Naive thymus-derived CD4-positive, alpha-beta T cell (primary cell): ENCODE measurements at regions of chr4 and their contacts with region 1.

Region 1: DNA sequence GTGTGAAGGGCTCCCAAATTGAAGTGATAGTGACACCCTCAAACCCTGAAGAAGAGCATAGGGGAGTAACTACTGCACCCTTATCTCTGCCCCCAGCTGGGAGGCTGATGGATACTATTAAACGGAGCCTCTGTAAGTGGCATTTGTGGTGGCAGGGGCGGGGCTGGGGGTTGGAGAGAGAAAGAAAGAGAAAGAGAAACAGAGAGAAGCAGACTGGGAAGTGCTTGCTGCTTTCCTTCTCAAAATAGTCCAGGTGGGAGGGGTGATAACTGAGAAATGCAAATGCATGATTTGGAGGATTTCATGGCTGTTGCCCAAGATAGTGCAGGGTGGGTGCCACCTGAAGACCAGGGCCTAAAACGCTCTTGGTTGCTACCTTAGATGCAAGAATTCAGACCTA is 253.5 kb upstream of the GATB start:
- DNase-seq: peak in 4 of 9 donors; percentile 18 to 45 (median 29)
- ATAC-seq: peak; percentile 33
- H3K4me3 ChIP-seq: no peak overlapping the region
- H3K4me3 Mint-ChIP-seq: peak overlapping the region; percentile 14 to 73 (median 59)
- H3K27ac ChIP-seq: no peak overlapping the region
- H3K27ac Mint-ChIP-seq: peak overlapping the region; percentile 50 to 88 (median 80)
- H3K4me1 ChIP-seq: peaks cover 36 to 40% of the 10 kb centered on the region in 2 donors
- H3K4me1 Mint-ChIP-seq: peaks cover 41 to 67% (median 52%) of the 10 kb centered on the region in 7 donors
- H3K27me3 ChIP-seq: no peaks in the 10 kb centered on the region
- H3K27me3 Mint-ChIP-seq: peaks cover 0 to 4% (median 0%) of the 10 kb centered on the region in 5 donors

Region 2: DNA sequence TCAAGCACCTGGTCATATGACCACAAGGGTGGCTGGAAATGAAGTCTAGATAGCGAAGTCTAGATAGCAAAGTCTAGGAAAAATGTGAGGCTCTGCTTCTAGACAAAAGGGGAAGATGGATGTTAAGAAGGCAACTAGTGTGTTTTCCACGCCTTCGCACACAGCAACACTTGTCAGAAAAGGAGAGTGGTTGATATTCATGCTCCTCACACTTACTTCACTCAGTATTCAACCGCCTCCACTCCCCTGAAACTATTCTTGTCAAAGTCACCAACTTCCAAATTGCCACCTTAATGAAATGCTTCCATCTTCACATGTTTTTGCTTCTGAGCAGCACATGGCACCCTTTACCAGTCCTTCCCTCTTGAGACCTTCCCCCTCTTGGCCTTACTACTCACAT is 1963.7 kb before region 1 on chr4:
- CTCF ChIA-PET with region 1: no interaction called
- POLR2A ChIA-PET with region 1: no interaction called
- intact Hi-C with region 1: no loop called
- DNase-seq: no peak
- ATAC-seq: no peak
- H3K4me3 ChIP-seq: no peak overlapping the region
- H3K4me3 Mint-ChIP-seq: no peak overlapping the region
- H3K27ac ChIP-seq: no peak overlapping the region
- H3K27ac Mint-ChIP-seq: no peak overlapping the region
- H3K4me1 ChIP-seq: no peaks in the 10 kb centered on the region
- H3K4me1 Mint-ChIP-seq: no peaks in the 10 kb centered on the region
- H3K27me3 ChIP-seq: peaks cover 0 to 3% of the 10 kb centered on the region in 2 donors
- H3K27me3 Mint-ChIP-seq: peaks cover 0 to 9% (median 0%) of the 10 kb centered on the region in 5 donors

Region 3: GRCh38 chr4:150943818-150944217 is 1070.5 kb before region 1 on chr4:
- CTCF ChIA-PET with region 1: no interaction called
- POLR2A ChIA-PET with region 1: no interaction called
- intact Hi-C with region 1: no loop called
- DNase-seq: no peak
- ATAC-seq: no peak
- H3K4me3 ChIP-seq: no peak overlapping the region
- H3K4me3 Mint-ChIP-seq: no peak overlapping the region
- H3K27ac ChIP-seq: no peak overlapping the region
- H3K27ac Mint-ChIP-seq: peak overlapping the region in 4 of 9 donors; percentile 1 to 42 (median 21)
- H3K4me1 ChIP-seq: peaks cover 0 to 7% of the 10 kb centered on the region in 2 donors
- H3K4me1 Mint-ChIP-seq: peaks cover 25 to 76% (median 65%) of the 10 kb centered on the region in 7 donors
- H3K27me3 ChIP-seq: no peaks in the 10 kb centered on the region
- H3K27me3 Mint-ChIP-seq: no peaks in the 10 kb centered on the region

Region 4: DNA sequence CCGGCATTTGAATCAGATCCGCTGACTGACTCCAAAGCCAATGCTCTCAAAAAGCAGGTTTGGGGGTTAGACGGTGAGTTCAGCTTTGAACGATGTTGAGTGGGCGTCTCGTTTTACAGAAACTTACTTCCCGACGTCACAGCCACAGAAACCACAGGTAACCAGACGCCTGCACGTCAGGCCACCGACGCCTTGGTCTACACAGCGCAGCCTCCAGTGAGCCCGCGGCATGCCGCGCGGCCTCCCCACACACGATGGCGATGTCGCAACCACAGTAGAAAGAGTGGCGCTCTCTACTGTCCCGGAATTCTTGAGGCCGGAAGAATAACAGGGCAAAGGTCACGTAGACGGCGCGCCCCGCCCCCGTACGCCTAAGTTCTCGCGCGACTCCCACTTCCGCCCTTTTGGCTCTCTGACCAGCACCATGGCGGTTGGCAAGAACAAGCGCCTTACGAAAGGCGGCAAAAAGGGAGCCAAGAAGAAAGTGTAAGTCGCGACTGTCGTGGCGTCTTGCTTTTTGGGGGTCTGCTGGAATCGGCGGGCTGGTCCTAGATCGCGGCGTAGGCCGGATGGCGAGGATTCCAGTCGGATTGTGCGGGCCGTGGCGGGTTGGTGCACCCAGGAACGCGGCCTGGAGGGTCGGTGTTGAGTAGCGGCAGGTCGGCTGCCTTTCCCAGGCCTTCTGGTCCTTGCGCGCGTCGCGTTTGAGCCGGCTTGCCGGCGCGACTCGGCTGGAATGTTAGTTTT is 914.9 kb before region 1 on chr4 and contains the start of gene RPS3A:
- CTCF ChIA-PET with region 1: no interaction called
- POLR2A ChIA-PET with region 1: no interaction called
- intact Hi-C with region 1: loop called in 1 of 2 experiments (anchors 10 kb)
- DNase-seq: peak; percentile 95 to 100 (median 99)
- ATAC-seq: peak; percentile 97
- H3K4me3 ChIP-seq: peak within 1 kb of the TSS; percentile 96
- H3K4me3 Mint-ChIP-seq: peak within 1 kb of the TSS; percentile 89 to 99 (median 96)
- H3K27ac ChIP-seq: peak within 1 kb of the TSS; percentile 89
- H3K27ac Mint-ChIP-seq: peak within 1 kb of the TSS; percentile 97 to 99 (median 98)
- H3K4me1 ChIP-seq: peaks cover 14 to 18% of the 10 kb centered on the region in 2 donors
- H3K4me1 Mint-ChIP-seq: peaks cover 24 to 43% (median 28%) of the 10 kb centered on the region in 7 donors
- H3K27me3 ChIP-seq: no peaks in the 10 kb centered on the region
- H3K27me3 Mint-ChIP-seq: peaks cover 0 to 4% (median 0%) of the 10 kb centered on the region in 5 donors
- total RNA-seq, gene RPS3A: 1,723 to 5,358 (median 3,483) TPM

Region 5: GRCh38 chr4:151882072-151882803 is 132.0 kb before region 1 on chr4:
- CTCF ChIA-PET with region 1: no interaction called
- POLR2A ChIA-PET with region 1: no interaction called
- intact Hi-C with region 1: loop called in 1 of 2 experiments (anchors 5 kb)
- DNase-seq: no peak
- ATAC-seq: peak; percentile 42
- H3K4me3 ChIP-seq: no peak overlapping the region
- H3K4me3 Mint-ChIP-seq: peak overlapping the region in 6 of 10 donors; percentile 4 to 56 (median 30)
- H3K27ac ChIP-seq: no peak overlapping the region
- H3K27ac Mint-ChIP-seq: peak overlapping the region; percentile 1 to 72 (median 39)
- H3K4me1 ChIP-seq: peaks cover 0 to 3% of the 10 kb centered on the region in 2 donors
- H3K4me1 Mint-ChIP-seq: peaks cover 6 to 30% (median 29%) of the 10 kb centered on the region in 7 donors
- H3K27me3 ChIP-seq: no peaks in the 10 kb centered on the region
- H3K27me3 Mint-ChIP-seq: no peaks in the 10 kb centered on the region

Region 6: DNA sequence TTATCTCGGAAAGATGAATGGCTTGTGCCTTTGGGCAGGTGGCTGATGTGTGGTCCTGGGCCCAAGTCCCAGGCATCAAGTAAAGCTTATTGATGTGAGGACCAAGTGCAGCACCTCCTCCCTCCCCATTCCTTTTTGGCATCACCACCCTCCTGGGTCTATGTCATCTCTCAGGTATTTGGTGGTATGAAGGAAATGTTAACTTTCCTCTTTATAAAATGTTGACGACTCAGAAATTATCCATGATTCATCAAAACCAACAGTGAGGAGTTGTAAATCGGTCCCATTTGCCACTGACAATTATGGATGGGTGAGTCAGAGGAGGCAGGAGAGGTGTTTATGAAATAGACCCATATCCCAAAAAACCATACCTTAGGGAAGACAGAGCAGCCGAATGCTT is 24.1 kb before region 1 on chr4:
- CTCF ChIA-PET with region 1: no interaction called
- POLR2A ChIA-PET with region 1: interaction called, 4 read pairs
- intact Hi-C with region 1: loop called in 1 of 2 experiments (anchors 2 kb)
- DNase-seq: no peak
- ATAC-seq: no peak
- H3K4me3 ChIP-seq: no peak overlapping the region
- H3K4me3 Mint-ChIP-seq: peak overlapping the region in 4 of 10 donors; percentile 18 to 84 (median 76)
- H3K27ac ChIP-seq: no peak overlapping the region
- H3K27ac Mint-ChIP-seq: peak overlapping the region; percentile 77 to 92 (median 90)
- H3K4me1 ChIP-seq: peaks cover 48 to 51% of the 10 kb centered on the region in 2 donors
- H3K4me1 Mint-ChIP-seq: peaks cover 38 to 64% (median 56%) of the 10 kb centered on the region in 7 donors
- H3K27me3 ChIP-seq: no peaks in the 10 kb centered on the region
- H3K27me3 Mint-ChIP-seq: peaks cover 0 to 2% (median 0%) of the 10 kb centered on the region in 5 donors

Region 7: DNA sequence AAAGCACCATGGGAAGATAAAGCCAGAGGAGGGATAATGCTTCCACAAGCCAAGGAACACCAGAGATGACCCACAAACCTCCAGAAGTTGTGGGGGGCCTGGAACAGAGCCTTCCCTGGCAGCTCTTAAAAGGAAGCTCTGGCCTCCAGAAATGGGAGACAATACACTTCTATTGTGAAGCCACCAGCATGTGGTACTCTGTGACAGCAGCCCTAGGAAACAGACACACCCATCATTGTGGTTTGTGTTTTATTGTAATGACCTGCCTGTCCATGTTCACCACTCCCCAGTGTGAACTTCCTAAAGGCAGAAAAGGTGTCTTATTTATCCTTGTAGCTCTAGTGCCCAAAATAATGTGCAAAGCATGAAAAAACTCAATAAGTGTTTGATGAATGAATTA is 10.6 kb after region 1 on chr4:
- CTCF ChIA-PET with region 1: interaction called, 6 read pairs
- POLR2A ChIA-PET with region 1: interaction called, 5 read pairs
- intact Hi-C with region 1: loop called in 1 of 2 experiments (anchors 2 kb)
- DNase-seq: no peak
- ATAC-seq: no peak
- H3K4me3 ChIP-seq: no peak overlapping the region
- H3K4me3 Mint-ChIP-seq: no peak overlapping the region
- H3K27ac ChIP-seq: no peak overlapping the region
- H3K27ac Mint-ChIP-seq: peak overlapping the region in 1 of 9 donors; percentile 31
- H3K4me1 ChIP-seq: peaks cover 12 to 15% of the 10 kb centered on the region in 2 donors
- H3K4me1 Mint-ChIP-seq: peaks cover 0 to 11% (median 0%) of the 10 kb centered on the region in 7 donors
- H3K27me3 ChIP-seq: no peaks in the 10 kb centered on the region
- H3K27me3 Mint-ChIP-seq: peaks cover 0 to 8% (median 0%) of the 10 kb centered on the region in 5 donors

Region 8: DNA sequence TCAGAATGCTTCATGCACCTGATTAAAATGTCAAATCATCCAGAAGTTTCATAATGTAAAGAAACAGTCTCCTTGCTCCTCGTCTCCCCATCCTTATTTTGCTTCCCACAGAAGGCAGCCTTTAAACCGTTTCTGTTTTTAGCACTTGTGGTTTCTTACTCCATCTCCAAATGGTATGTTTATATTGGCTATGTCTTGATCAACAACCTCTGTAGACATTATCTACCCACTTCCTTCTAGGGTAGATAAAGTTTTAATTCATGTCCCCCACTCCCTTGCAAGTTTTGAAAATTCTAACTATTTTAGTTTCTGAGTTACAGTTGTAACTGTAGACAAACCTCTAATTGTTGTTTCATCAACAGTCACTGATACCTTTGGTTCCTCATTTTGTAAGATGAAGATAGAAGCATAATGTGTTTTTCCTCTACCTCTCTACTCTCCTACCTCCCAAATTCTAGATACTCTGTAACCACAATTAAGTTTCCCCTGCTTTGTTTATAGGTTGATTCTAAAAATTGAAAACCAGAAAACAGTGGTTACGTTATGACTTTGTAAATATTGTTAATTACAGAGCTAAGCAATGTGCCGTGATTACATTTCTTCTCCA is 38.3 kb after region 1 on chr4:
- CTCF ChIA-PET with region 1: no interaction called
- POLR2A ChIA-PET with region 1: interaction called, 4 read pairs
- intact Hi-C with region 1: loop called (anchors 5 kb)
- DNase-seq: no peak
- ATAC-seq: no peak
- H3K4me3 ChIP-seq: no peak overlapping the region
- H3K4me3 Mint-ChIP-seq: peak overlapping the region in 6 of 10 donors; percentile 2 to 35 (median 14)
- H3K27ac ChIP-seq: no peak overlapping the region
- H3K27ac Mint-ChIP-seq: peak overlapping the region in 7 of 9 donors; percentile 12 to 69 (median 55)
- H3K4me1 ChIP-seq: peaks cover 11 to 12% of the 10 kb centered on the region in 2 donors
- H3K4me1 Mint-ChIP-seq: peaks cover 15 to 32% (median 21%) of the 10 kb centered on the region in 7 donors
- H3K27me3 ChIP-seq: no peaks in the 10 kb centered on the region
- H3K27me3 Mint-ChIP-seq: peaks cover 0 to 10% (median 0%) of the 10 kb centered on the region in 5 donors

Region 9: DNA sequence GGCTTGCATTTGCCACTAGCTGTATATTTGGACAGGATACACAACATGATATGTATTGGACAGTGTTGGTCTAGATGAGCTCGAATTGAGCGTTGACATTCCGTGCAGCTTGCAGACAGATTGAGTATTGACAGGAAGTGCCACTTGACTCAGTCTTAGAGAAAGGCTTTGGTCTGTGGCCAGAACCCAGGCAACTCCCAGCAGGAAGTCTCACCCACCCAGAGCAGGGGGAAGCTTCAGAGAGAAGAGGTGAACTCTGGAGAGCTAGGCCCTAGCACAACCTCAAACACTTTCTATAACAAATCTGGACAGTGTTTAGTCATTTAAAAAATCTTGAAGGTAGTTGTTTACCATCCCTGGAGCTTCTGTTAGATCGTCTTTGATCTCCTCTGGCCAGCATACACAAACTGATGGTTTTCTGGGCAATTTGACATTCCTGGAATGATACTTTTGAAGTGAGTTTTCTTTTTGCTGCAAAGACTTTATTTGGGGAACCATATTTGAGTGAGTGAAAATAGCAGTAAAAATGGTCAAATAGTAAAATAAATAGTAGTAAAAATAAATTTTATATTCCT is 241.2 kb after region 1 on chr4:
- CTCF ChIA-PET with region 1: no interaction called
- POLR2A ChIA-PET with region 1: no interaction called
- intact Hi-C with region 1: loop called in 1 of 2 experiments (anchors 5 kb)
- DNase-seq: peak in 8 of 9 donors; percentile 44 to 64 (median 58)
- ATAC-seq: peak; percentile 89
- H3K4me3 ChIP-seq: no peak overlapping the region
- H3K4me3 Mint-ChIP-seq: no peak overlapping the region
- H3K27ac ChIP-seq: peak overlapping the region; percentile 36
- H3K27ac Mint-ChIP-seq: no peak overlapping the region
- H3K4me1 ChIP-seq: peaks cover 37 to 45% of the 10 kb centered on the region in 2 donors
- H3K4me1 Mint-ChIP-seq: peaks cover 0 to 17% (median 11%) of the 10 kb centered on the region in 7 donors
- H3K27me3 ChIP-seq: no peaks in the 10 kb centered on the region
- H3K27me3 Mint-ChIP-seq: peaks cover 0 to 2% (median 0%) of the 10 kb centered on the region in 5 donors